Caco-2 (cell line): ENCODE measurements at regions of chr3 and their contacts with region 1.

Region 1: GRCh38 chr3:160796813-160797164 is 40.8 kb downstream of the PPM1L start:
- DNase-seq: peak; percentile 50 to 63
- H3K4me3 ChIP-seq: no peak overlapping the region
- H3K4me3 Mint-ChIP-seq: no peak overlapping the region
- H3K27ac Mint-ChIP-seq: peak overlapping the region; percentile 0
- H3K4me1 ChIP-seq: peaks cover 16% of the 10 kb centered on the region
- H3K4me1 Mint-ChIP-seq: peaks cover 21% of the 10 kb centered on the region
- H3K27me3 ChIP-seq: no peaks in the 10 kb centered on the region; the same call in 1 of the 2 replicates
- H3K27me3 Mint-ChIP-seq: peaks cover 20% of the 10 kb centered on the region
- CTCF ChIP-seq: no peak

Region 2: DNA sequence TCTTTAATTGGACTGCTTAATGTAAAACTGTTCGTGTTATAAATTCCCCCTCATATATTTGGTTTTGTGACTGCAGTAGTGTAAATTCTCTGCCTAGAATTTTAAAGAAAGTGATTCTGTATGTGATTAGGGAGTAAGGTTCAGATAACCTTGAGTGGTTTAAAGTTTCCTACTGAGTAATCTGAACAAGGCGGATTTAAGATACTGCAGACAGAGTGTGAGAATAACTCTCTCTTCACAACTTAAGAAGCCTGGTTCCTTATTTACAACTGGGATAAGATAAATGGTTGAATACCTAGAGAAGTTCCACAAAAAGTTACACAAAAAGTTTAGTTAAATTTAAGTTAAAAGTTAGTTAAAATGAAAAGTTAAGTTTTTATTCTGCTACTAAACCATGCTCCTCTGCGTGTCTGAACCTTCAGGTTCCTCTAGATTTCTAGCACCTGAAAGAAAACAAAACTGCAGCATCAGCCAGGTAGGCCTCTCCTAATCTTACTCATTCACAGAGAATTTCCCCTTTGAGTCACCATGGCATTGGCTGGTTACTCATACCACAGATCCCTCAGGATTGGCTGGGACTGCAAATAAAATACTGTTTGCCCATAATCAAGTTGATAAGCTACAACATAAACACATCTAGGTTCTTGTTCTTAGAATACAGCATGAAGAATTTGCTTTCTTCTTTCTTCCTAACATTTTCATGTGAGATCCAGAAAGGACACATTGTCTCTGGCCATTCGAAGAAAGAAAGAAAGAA is 120.1 kb before region 1 on chr3 and contains the start of gene ARL14:
- CTCF ChIA-PET with region 1: no interaction called
- POLR2A ChIA-PET with region 1: no interaction called
- intact Hi-C with region 1: no loop called
- DNase-seq: peak; percentile 52 to 54
- H3K4me3 ChIP-seq: peak within 1 kb of the TSS; percentile 3; the same call in 1 of the 2 replicates
- H3K4me3 Mint-ChIP-seq: peak within 1 kb of the TSS; percentile 65
- H3K27ac Mint-ChIP-seq: peak within 1 kb of the TSS; percentile 78
- H3K4me1 ChIP-seq: peaks cover 60% of the 10 kb centered on the region
- H3K4me1 Mint-ChIP-seq: peaks cover 51% of the 10 kb centered on the region
- H3K27me3 ChIP-seq: no peaks in the 10 kb centered on the region
- H3K27me3 Mint-ChIP-seq: no peaks in the 10 kb centered on the region
- CTCF ChIP-seq: no peak
- total RNA-seq, gene ARL14: 0.81 and 0.84 TPM in 2 replicates

Region 3: GRCh38 chr3:160784848-160785247 is 11.9 kb before region 1 on chr3:
- CTCF ChIA-PET with region 1: no interaction called
- POLR2A ChIA-PET with region 1: no interaction called
- intact Hi-C with region 1: loop called (anchors 1 kb)
- DNase-seq: peak in 1 of 2 experiments; percentile 40
- H3K4me3 ChIP-seq: no peak overlapping the region
- H3K4me3 Mint-ChIP-seq: no peak overlapping the region
- H3K27ac Mint-ChIP-seq: no peak overlapping the region
- H3K4me1 ChIP-seq: peaks cover 6% of the 10 kb centered on the region
- H3K4me1 Mint-ChIP-seq: peaks cover 7% of the 10 kb centered on the region
- H3K27me3 ChIP-seq: no peaks in the 10 kb centered on the region
- H3K27me3 Mint-ChIP-seq: no peaks in the 10 kb centered on the region
- CTCF ChIP-seq: no peak

Region 4: DNA sequence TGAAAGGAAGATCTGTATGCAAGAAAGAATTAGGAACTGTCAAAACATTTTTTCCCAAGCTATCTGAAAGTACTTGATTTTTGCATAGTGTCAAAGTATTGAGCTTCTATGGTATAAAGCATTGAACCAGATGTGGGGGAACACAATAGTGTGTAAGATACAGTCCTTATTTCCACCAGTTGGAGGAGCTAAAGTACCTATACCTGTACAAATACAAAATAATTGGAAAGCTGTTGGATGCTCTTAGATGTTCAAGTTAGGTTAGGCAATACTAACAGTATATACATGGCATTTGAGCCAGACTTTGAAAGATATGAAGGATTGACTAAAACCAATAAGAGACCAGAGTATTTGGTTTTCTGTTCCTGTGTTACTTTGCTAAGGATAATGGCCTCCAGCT is 160.0 kb after region 1 on chr3:
- CTCF ChIA-PET with region 1: no interaction called
- POLR2A ChIA-PET with region 1: no interaction called
- intact Hi-C with region 1: no loop called
- DNase-seq: peak in 1 of 2 experiments; percentile 4
- H3K4me3 ChIP-seq: no peak overlapping the region
- H3K4me3 Mint-ChIP-seq: no peak overlapping the region
- H3K27ac Mint-ChIP-seq: no peak overlapping the region
- H3K4me1 ChIP-seq: no peaks in the 10 kb centered on the region
- H3K4me1 Mint-ChIP-seq: no peaks in the 10 kb centered on the region
- H3K27me3 ChIP-seq: no peaks in the 10 kb centered on the region
- H3K27me3 Mint-ChIP-seq: no peaks in the 10 kb centered on the region
- CTCF ChIP-seq: peak in 1 of 2 experiments; percentile 23